ENCODE measurements at regions of chr1 and their contacts with region 1.

Region 1: DNA sequence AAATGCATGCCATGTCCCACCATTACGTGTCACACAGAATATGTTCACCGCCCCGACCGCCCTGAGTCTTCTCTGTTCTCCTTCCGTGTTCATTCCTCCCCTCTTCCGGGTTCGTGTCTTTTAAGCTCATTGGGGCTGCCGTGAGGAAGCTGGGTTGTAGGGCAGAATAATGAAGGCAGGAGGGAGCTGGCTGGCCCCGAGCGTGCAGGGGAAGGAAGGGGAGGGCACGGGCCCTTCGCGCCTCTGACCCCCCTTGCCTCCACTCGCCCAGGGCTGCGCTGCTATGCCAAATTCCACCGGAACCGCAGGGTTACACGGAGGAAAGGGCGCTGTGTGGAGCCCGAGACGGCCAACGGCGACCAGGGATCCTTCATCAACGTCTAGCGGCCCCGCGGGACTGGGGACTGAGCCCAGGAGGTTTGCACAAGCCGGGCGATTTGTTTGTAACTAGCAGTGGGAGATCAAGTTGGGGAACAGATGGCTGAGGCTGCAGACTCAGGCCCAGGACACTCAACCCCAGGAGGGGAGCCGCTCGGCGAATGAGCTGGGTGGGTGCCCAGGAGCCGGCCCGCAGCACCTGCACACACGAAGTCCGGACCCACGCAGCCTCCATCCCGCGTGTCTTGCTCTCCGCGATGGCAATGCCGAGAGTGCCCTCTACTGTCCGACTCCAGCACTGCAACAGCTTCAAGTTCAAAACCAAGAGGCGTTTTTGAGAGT is 16.5 kb upstream of the AGTRAP start:
- DNase-seq: peak; percentile 82 to 86 (median 84)
- H3K4me3 ChIP-seq: peak overlapping the region; percentile 33 to 51
- H3K4me3 Mint-ChIP-seq: peak overlapping the region; percentile 65 to 87 (median 81)
- H3K27ac ChIP-seq: peak overlapping the region; percentile 50
- H3K27ac Mint-ChIP-seq: peak overlapping the region; percentile 58 to 96 (median 91)
- H3K4me1 ChIP-seq: peaks cover 17% of the 10 kb centered on the region
- H3K4me1 Mint-ChIP-seq: peaks cover 7 to 17% (median 11%) of the 10 kb centered on the region in 4 donors
- H3K27me3 ChIP-seq: no peaks in the 10 kb centered on the region
- H3K27me3 Mint-ChIP-seq: no peaks in the 10 kb centered on the region

Region 2: DNA sequence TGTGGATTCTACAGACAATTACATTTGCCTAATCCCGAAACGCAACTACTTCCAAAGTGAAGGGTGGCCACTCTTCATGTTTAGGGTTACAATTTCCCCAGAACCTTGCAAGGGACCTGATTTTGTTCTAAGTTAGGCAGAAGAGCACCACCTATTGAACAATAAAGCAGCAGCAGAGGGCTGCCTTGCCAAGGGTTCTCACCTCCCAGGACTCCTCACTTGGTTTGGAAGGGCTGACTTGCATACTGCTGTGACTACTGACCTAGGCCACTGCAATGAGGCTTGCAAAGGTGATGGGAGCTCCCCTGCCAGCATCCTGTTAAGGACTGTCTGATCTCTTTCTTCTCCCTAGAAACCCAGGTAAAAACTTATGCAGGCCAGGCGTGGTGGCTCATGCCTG is 471.3 kb before region 1 on chr1:
- CTCF ChIA-PET with region 1: interaction called, 16 read pairs
- POLR2A ChIA-PET with region 1: no interaction called
- intact Hi-C with region 1: no loop called
- DNase-seq: no peak
- H3K4me3 ChIP-seq: no peak overlapping the region
- H3K4me3 Mint-ChIP-seq: no peak overlapping the region
- H3K27ac ChIP-seq: no peak overlapping the region
- H3K27ac Mint-ChIP-seq: peak overlapping the region in 6 of 7 donors; percentile 50 to 85 (median 72)
- H3K4me1 ChIP-seq: peaks cover 38% of the 10 kb centered on the region
- H3K4me1 Mint-ChIP-seq: peaks cover 19 to 32% (median 23%) of the 10 kb centered on the region in 4 donors
- H3K27me3 ChIP-seq: no peaks in the 10 kb centered on the region
- H3K27me3 Mint-ChIP-seq: no peaks in the 10 kb centered on the region

Region 3: GRCh38 chr1:11645670-11646265 is 73.7 kb before region 1 on chr1:
- CTCF ChIA-PET with region 1: interaction called, 165 read pairs
- POLR2A ChIA-PET with region 1: interaction called, 67 read pairs
- intact Hi-C with region 1: loop called (anchors 1 kb)
- DNase-seq: peak; percentile 71 to 75 (median 73)
- H3K4me3 ChIP-seq: no peak overlapping the region
- H3K4me3 Mint-ChIP-seq: no peak overlapping the region
- H3K27ac ChIP-seq: no peak overlapping the region
- H3K27ac Mint-ChIP-seq: no peak overlapping the region
- H3K4me1 ChIP-seq: peaks cover 15% of the 10 kb centered on the region
- H3K4me1 Mint-ChIP-seq: peaks cover 5 to 21% (median 12%) of the 10 kb centered on the region in 4 donors
- H3K27me3 ChIP-seq: no peaks in the 10 kb centered on the region
- H3K27me3 Mint-ChIP-seq: peaks cover 0 to 2% of the 10 kb centered on the region in 2 donors

Region 4: DNA sequence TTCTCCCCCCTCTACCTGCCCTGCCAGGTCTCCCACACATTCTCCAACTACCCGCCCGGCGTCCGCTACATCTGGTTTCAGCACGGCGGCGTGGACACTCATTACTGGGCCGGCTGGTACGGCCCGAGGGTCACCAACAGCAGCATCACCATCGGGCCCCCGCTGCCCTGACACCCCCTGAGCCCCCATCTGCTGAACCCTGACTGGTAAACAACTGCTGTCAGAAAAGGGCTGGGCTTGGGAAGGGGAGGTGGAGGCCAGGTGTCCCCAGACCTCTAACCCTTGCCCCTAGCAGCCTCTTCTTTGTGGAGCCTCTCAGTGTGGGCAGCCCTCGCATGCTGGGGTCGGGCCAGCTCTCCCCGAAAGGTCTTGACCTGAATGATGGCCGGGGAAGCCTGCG is 58.4 kb before region 1 on chr1:
- CTCF ChIA-PET with region 1: interaction called, 96 read pairs
- POLR2A ChIA-PET with region 1: interaction called, 57 read pairs
- intact Hi-C with region 1: loop called (anchors 1 kb)
- DNase-seq: no peak
- H3K4me3 ChIP-seq: no peak overlapping the region
- H3K4me3 Mint-ChIP-seq: no peak overlapping the region
- H3K27ac ChIP-seq: no peak overlapping the region
- H3K27ac Mint-ChIP-seq: no peak overlapping the region
- H3K4me1 ChIP-seq: peaks cover 8% of the 10 kb centered on the region
- H3K4me1 Mint-ChIP-seq: peaks cover 0 to under 1% (median 0%) of the 10 kb centered on the region in 4 donors
- H3K27me3 ChIP-seq: no peaks in the 10 kb centered on the region
- H3K27me3 Mint-ChIP-seq: no peaks in the 10 kb centered on the region

Region 5: DNA sequence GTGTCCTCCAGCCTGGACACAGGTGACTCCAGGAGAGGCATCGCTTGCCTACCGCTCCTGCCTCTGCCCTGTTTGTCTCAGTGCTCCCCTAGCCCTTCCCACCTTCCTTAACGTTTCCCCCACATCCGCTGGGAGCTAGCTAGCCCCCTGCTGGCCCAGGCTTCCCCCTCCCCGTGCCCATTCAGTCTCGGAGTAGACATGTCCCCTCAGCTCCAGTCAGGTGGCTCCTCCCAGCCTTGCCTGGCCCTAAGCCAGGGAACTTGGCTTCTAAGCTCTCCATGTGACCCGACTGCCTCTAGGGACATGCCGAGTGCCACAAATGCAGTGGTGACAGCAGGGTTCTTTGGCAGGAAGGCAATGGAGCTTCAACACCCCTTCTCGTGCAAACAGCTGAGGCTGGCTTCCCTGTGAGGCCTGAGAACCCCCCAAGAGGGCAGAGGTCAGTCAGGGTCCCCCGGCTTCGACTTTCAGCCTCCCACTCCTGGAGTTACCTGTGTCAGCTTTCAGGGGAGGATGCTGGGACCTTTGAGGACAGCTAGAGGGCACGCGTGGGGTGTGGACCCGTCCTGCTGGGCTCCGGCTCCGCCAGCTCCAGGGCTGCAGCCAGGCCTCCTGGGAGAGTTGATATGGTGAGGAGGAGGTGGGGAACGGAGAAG is 11.7 kb before region 1 on chr1:
- CTCF ChIA-PET with region 1: interaction called, 16 read pairs
- POLR2A ChIA-PET with region 1: interaction called, 4 read pairs
- intact Hi-C with region 1: no loop called
- DNase-seq: no peak
- H3K4me3 ChIP-seq: no peak overlapping the region
- H3K4me3 Mint-ChIP-seq: no peak overlapping the region
- H3K27ac ChIP-seq: no peak overlapping the region
- H3K27ac Mint-ChIP-seq: no peak overlapping the region
- H3K4me1 ChIP-seq: no peaks in the 10 kb centered on the region
- H3K4me1 Mint-ChIP-seq: no peaks in the 10 kb centered on the region
- H3K27me3 ChIP-seq: peaks cover 3% of the 10 kb centered on the region
- H3K27me3 Mint-ChIP-seq: peaks cover 15 to 17% of the 10 kb centered on the region in 2 donors

Region 6: GRCh38 chr1:11735854-11736745 is 16.6 kb after region 1 on chr1 and contains the start of gene AGTRAP:
- CTCF ChIA-PET with region 1: interaction called, 20 read pairs
- POLR2A ChIA-PET with region 1: interaction called, 31 read pairs
- intact Hi-C with region 1: loop called (anchors 2 kb)
- DNase-seq: peak; percentile 77 to 89 (median 79)
- H3K4me3 ChIP-seq: peak within 1 kb of the TSS; percentile 84 to 93
- H3K4me3 Mint-ChIP-seq: peak within 1 kb of the TSS; percentile 89 to 97 (median 92)
- H3K27ac ChIP-seq: peak within 1 kb of the TSS; percentile 81
- H3K27ac Mint-ChIP-seq: peak within 1 kb of the TSS; percentile 44 to 93 (median 87)
- H3K4me1 ChIP-seq: peaks cover 60% of the 10 kb centered on the region
- H3K4me1 Mint-ChIP-seq: peaks cover 39 to 81% (median 56%) of the 10 kb centered on the region in 4 donors
- H3K27me3 ChIP-seq: no peaks in the 10 kb centered on the region
- H3K27me3 Mint-ChIP-seq: no peaks in the 10 kb centered on the region
- total RNA-seq, gene AGTRAP: 19.0 to 21.7 TPM

Region 7: DNA sequence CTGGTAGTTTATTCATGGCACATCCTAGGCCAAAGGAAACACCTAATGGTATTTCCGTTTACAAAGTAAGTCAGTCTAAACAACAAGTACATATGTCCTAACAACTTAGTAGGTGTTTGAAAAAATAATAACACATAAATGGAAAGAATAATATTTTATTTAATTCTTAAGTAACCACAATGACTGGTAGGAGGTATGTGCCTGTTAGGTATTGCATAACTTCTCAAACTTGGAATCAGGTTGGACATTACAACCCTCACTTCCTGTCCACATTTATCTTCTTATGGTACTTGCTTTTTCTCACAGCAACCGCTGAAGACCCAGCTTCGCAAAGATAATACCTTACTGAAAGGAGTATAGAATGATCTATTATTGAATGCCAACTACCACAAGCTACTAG is 574.6 kb after region 1 on chr1:
- CTCF ChIA-PET with region 1: no interaction called
- POLR2A ChIA-PET with region 1: no interaction called
- intact Hi-C with region 1: no loop called
- DNase-seq: no peak
- H3K4me3 ChIP-seq: no peak overlapping the region
- H3K4me3 Mint-ChIP-seq: no peak overlapping the region
- H3K27ac ChIP-seq: no peak overlapping the region
- H3K27ac Mint-ChIP-seq: no peak overlapping the region
- H3K4me1 ChIP-seq: no peaks in the 10 kb centered on the region
- H3K4me1 Mint-ChIP-seq: peaks cover 0 to 3% (median under 1%) of the 10 kb centered on the region in 4 donors
- H3K27me3 ChIP-seq: no peaks in the 10 kb centered on the region
- H3K27me3 Mint-ChIP-seq: no peaks in the 10 kb centered on the region